Mammary epithelial cell (primary cell): ENCODE measurements at regions of chr22 and their contacts with region 1.

Region 1: GRCh38 chr22:45553351-45554039 is 50.8 kb downstream of the FBLN1 start:
- DNase-seq: peak; percentile 80
- H3K4me3 ChIP-seq: no peak overlapping the region
- H3K27ac ChIP-seq: peak overlapping the region; percentile 49
- H3K4me1 ChIP-seq: peaks cover 43% of the 10 kb centered on the region
- H3K27me3 ChIP-seq: no peaks in the 10 kb centered on the region
- CTCF ChIP-seq: peak; percentile 93 to 99

Region 2: GRCh38 chr22:45101515-45102227 is 451.8 kb before region 1 on chr22:
- CTCF ChIA-PET with region 1: no interaction called
- dilution Hi-C with region 1: no loop called
- in situ Hi-C with region 1: no loop called
- intact Hi-C with region 1: loop called (anchors 2 kb)
- DNase-seq: peak; percentile 15
- H3K4me3 ChIP-seq: no peak overlapping the region
- H3K27ac ChIP-seq: no peak overlapping the region
- H3K4me1 ChIP-seq: peaks cover 12% of the 10 kb centered on the region
- H3K27me3 ChIP-seq: no peaks in the 10 kb centered on the region
- CTCF ChIP-seq: peak; percentile 66 to 81

Region 3: GRCh38 chr22:45429981-45430775 is 123.3 kb before region 1 on chr22:
- CTCF ChIA-PET with region 1: no interaction called
- dilution Hi-C with region 1: loop called (anchors 5 kb)
- in situ Hi-C with region 1: no loop called
- intact Hi-C with region 1: no loop called
- DNase-seq: no peak
- H3K4me3 ChIP-seq: no peak overlapping the region
- H3K27ac ChIP-seq: no peak overlapping the region
- H3K4me1 ChIP-seq: no peaks in the 10 kb centered on the region
- H3K27me3 ChIP-seq: no peaks in the 10 kb centered on the region
- CTCF ChIP-seq: no peak

Region 4: DNA sequence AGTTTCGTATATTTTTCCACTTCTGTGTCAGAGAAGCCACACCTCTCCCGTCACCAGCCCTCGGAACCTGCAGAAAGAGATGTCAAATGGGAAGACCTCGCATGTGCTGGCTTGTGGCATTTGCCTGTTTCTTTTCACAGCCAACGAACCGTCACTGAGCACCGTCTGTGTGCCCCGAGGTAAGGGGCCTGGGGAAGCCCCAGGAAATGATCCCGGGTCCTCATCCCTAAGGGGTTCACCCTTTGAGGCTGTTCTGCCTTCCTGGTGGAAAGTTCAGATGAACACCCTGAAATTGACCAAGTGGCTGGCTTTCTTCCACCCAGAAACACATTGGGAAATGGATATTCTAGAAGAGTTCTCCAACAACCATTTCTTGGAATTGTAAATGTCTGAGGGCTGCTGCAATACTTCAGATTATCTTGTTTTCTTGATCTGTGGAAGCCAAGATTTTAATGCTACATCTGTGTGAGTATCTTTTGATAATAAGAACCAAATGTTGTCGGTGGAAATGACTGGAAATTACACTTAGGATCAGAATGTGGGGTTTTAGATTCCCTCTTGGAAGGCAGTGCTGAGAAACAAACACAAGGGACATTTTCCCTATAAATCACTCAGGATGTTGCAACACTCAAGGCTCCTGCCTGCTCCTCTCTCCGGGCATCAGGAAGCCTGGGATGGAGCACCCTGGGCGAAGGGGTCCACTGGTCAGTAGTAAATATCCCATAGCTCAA is 102.4 kb before region 1 on chr22:
- CTCF ChIA-PET with region 1: no interaction called
- dilution Hi-C with region 1: no loop called
- in situ Hi-C with region 1: loop called in 1 of 2 experiments (anchors 5 kb)
- intact Hi-C with region 1: no loop called
- DNase-seq: no peak
- H3K4me3 ChIP-seq: no peak overlapping the region
- H3K27ac ChIP-seq: no peak overlapping the region
- H3K4me1 ChIP-seq: no peaks in the 10 kb centered on the region
- H3K27me3 ChIP-seq: peaks cover 2% of the 10 kb centered on the region
- CTCF ChIP-seq: no peak

Region 5: GRCh38 chr22:45478108-45478771 is 75.3 kb before region 1 on chr22:
- CTCF ChIA-PET with region 1: no interaction called
- dilution Hi-C with region 1: loop called (anchors 10 kb)
- in situ Hi-C with region 1: no loop called
- intact Hi-C with region 1: no loop called
- DNase-seq: no peak
- H3K4me3 ChIP-seq: no peak overlapping the region
- H3K27ac ChIP-seq: no peak overlapping the region
- H3K4me1 ChIP-seq: no peaks in the 10 kb centered on the region
- H3K27me3 ChIP-seq: no peaks in the 10 kb centered on the region
- CTCF ChIP-seq: no peak

Region 6: GRCh38 chr22:45516923-45517675 is 36.4 kb before region 1 on chr22:
- CTCF ChIA-PET with region 1: no interaction called
- dilution Hi-C with region 1: no loop called
- in situ Hi-C with region 1: no loop called
- intact Hi-C with region 1: loop called (anchors 1 kb)
- DNase-seq: peak; percentile 86
- H3K4me3 ChIP-seq: no peak overlapping the region
- H3K27ac ChIP-seq: peak overlapping the region; percentile 43
- H3K4me1 ChIP-seq: peaks cover 43% of the 10 kb centered on the region
- H3K27me3 ChIP-seq: no peaks in the 10 kb centered on the region
- CTCF ChIP-seq: no peak